Caco-2 (cell line): ENCODE measurements at regions of chr1 and their contacts with region 1.

Region 1: DNA sequence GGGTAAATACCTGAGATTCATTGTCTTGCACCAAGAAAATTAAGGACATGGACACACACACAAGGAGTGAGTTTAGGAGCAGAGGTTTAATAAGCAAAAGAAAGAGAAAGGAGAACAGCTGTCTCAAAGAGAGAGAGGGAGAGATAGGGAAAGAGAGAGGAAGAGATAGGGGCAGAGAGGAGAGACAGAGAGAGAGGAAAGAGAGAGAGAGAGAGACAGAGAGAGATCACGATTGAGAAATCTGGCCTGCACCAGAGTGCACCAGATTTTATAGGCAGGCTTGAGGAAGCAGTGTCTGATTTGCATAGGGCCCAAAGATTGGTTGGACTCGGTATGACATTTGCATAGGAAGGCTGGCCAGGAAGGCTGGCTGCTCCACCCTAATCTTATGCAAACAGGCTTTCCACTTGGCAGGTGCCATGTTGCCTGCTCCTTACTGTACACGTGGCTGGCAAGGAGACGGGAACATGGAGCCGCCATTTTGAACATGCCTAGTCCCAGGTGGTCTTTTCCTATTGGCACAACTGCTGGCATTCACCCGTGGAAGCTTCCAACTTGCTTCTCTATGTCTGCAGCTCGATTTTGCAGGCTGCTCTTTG is 419.9 kb downstream of the ZP4 start:
- DNase-seq: peak; percentile 81 to 88
- H3K4me3 ChIP-seq: peak overlapping the region; percentile 9
- H3K4me3 Mint-ChIP-seq: peak overlapping the region; percentile 23
- H3K27ac Mint-ChIP-seq: peak overlapping the region; percentile 1
- H3K4me1 ChIP-seq: 0 out of 2 replicates have a peak, but pooled peaks cover 4% of the 10 kb centered on the region
- H3K4me1 Mint-ChIP-seq: no peaks in the 10 kb centered on the region
- H3K27me3 ChIP-seq: no peaks in the 10 kb centered on the region
- H3K27me3 Mint-ChIP-seq: no peaks in the 10 kb centered on the region
- CTCF ChIP-seq: no peak

Region 2: GRCh38 chr1:235697508-235697907 is 1773.3 kb before region 1 on chr1:
- CTCF ChIA-PET with region 1: interaction called, 10 read pairs
- POLR2A ChIA-PET with region 1: no interaction called
- intact Hi-C with region 1: no loop called
- DNase-seq: no peak
- H3K4me3 ChIP-seq: no peak overlapping the region
- H3K4me3 Mint-ChIP-seq: no peak overlapping the region
- H3K27ac Mint-ChIP-seq: no peak overlapping the region
- H3K4me1 ChIP-seq: no peaks in the 10 kb centered on the region
- H3K4me1 Mint-ChIP-seq: no peaks in the 10 kb centered on the region
- H3K27me3 ChIP-seq: no peaks in the 10 kb centered on the region
- H3K27me3 Mint-ChIP-seq: no peaks in the 10 kb centered on the region
- CTCF ChIP-seq: no peak

Region 3: GRCh38 chr1:237386362-237387143 is 84.3 kb before region 1 on chr1:
- CTCF ChIA-PET with region 1: no interaction called
- POLR2A ChIA-PET with region 1: no interaction called
- intact Hi-C with region 1: no loop called
- DNase-seq: no peak
- H3K4me3 ChIP-seq: no peak overlapping the region
- H3K4me3 Mint-ChIP-seq: no peak overlapping the region
- H3K27ac Mint-ChIP-seq: no peak overlapping the region
- H3K4me1 ChIP-seq: no peaks in the 10 kb centered on the region
- H3K4me1 Mint-ChIP-seq: no peaks in the 10 kb centered on the region
- H3K27me3 ChIP-seq: no peaks in the 10 kb centered on the region
- H3K27me3 Mint-ChIP-seq: peaks cover 3% of the 10 kb centered on the region
- CTCF ChIP-seq: peak; percentile 47 to 51